ENCODE measurements at regions of chr2 and their contacts with region 1.

Region 1: GRCh38 chr2:191664823-191665677 is 12.9 kb upstream of the NABP1 start:
- DNase-seq: no peak
- H3K4me3 Mint-ChIP-seq: no peak overlapping the region
- H3K27ac Mint-ChIP-seq: no peak overlapping the region
- H3K4me1 Mint-ChIP-seq: peaks cover 33% of the 10 kb centered on the region
- H3K27me3 Mint-ChIP-seq: no peaks in the 10 kb centered on the region

Region 2: GRCh38 chr2:191650896-191651773 is 13.9 kb before region 1 on chr2:
- intact Hi-C with region 1: loop called (anchors 2 kb)
- DNase-seq: no peak
- H3K4me3 Mint-ChIP-seq: no peak overlapping the region
- H3K27ac Mint-ChIP-seq: peak overlapping the region; percentile 26
- H3K4me1 Mint-ChIP-seq: peaks cover 14% of the 10 kb centered on the region
- H3K27me3 Mint-ChIP-seq: no peaks in the 10 kb centered on the region